ENCODE measurements at regions of chr22 and their contacts with region 1.

Region 1: DNA sequence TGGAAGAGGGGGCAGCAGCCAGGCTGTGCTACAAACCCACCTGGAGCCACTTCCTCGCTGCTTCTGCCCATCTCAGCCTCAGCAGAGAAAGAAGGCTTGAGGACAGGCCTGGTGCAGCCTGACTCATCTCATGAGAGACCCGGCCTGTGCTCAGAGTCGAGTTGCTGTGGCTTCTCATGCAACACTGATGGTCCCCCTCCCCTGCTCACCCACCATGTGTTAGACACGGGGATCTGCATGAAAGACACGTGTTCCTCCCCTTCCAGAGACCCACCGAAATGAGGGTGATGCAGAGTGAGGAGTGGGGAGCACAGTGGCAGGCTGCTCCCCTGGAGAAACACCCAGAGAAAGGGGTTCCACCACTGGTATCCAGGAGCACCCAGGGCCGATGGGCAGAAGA is 15.0 kb downstream of the RTN4R start:
- DNase-seq: no peak
- ATAC-seq: no peak
- H3K4me3 ChIP-seq: no peak overlapping the region
- H3K27ac ChIP-seq: no peak overlapping the region
- H3K4me1 ChIP-seq: peaks cover 5 to 9% of the 10 kb centered on the region in 2 donors
- H3K27me3 ChIP-seq: no peaks in the 10 kb centered on the region
- CTCF ChIP-seq: no peak
- POLR2A ChIP-seq: no peak

Region 2: GRCh38 chr22:20194681-20195593 is 58.2 kb before region 1 on chr22:
- in situ Hi-C with region 1: no loop called
- intact Hi-C with region 1: loop called (anchors 2 kb)
- DNase-seq: no peak
- ATAC-seq: no peak
- H3K4me3 ChIP-seq: no peak overlapping the region
- H3K27ac ChIP-seq: no peak overlapping the region
- H3K4me1 ChIP-seq: no peaks in the 10 kb centered on the region
- H3K27me3 ChIP-seq: no peaks in the 10 kb centered on the region
- CTCF ChIP-seq: no peak
- POLR2A ChIP-seq: no peak